A673 (cell line): ENCODE measurements at regions of chrX and their contacts with region 1.

Region 1: GRCh38 chrX:17689971-17690409 is 47.3 kb upstream of the SCML1 start:
- DNase-seq: peak; percentile 71
- H3K4me3 ChIP-seq: no peak overlapping the region
- H3K27ac ChIP-seq: no peak overlapping the region
- H3K4me1 ChIP-seq: no peaks in the 10 kb centered on the region
- H3K27me3 ChIP-seq: peaks cover 5% of the 10 kb centered on the region
- CTCF ChIP-seq: peak; percentile 74

Region 2: GRCh38 chrX:17120816-17121215 is 569.2 kb before region 1 on chrX:
- CTCF ChIA-PET with region 1: no interaction called
- POLR2A ChIA-PET with region 1: no interaction called
- intact Hi-C with region 1: loop called (anchors 5 kb)
- DNase-seq: no peak
- H3K4me3 ChIP-seq: no peak overlapping the region
- H3K27ac ChIP-seq: no peak overlapping the region
- H3K4me1 ChIP-seq: no peaks in the 10 kb centered on the region
- H3K27me3 ChIP-seq: no peaks in the 10 kb centered on the region
- CTCF ChIP-seq: no peak

Region 3: DNA sequence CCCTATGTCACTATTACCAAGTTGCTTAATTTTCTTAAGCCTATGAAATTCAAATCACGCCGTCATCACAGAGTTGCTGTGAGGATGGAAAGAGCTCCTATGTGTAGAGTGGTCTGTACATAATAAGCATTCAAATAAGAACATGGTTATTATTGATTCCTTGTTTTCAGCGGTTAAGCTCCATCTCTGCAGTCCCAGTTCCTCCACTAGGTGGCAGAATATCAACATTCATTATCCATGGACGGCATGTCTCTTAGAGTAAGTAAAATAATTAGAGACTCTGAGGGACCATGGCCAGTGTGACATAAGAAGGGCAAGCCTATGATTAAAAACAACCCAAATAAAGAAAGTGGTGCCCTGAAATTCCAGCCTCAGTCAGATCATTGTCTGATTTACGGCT is 447.5 kb before region 1 on chrX:
- CTCF ChIA-PET with region 1: interaction called, 3 read pairs
- POLR2A ChIA-PET with region 1: no interaction called
- intact Hi-C with region 1: loop called (anchors 5 kb)
- DNase-seq: peak; percentile 62
- H3K4me3 ChIP-seq: no peak overlapping the region
- H3K27ac ChIP-seq: no peak overlapping the region
- H3K4me1 ChIP-seq: no peaks in the 10 kb centered on the region
- H3K27me3 ChIP-seq: peaks cover 9% of the 10 kb centered on the region
- CTCF ChIP-seq: peak; percentile 86

Region 4: DNA sequence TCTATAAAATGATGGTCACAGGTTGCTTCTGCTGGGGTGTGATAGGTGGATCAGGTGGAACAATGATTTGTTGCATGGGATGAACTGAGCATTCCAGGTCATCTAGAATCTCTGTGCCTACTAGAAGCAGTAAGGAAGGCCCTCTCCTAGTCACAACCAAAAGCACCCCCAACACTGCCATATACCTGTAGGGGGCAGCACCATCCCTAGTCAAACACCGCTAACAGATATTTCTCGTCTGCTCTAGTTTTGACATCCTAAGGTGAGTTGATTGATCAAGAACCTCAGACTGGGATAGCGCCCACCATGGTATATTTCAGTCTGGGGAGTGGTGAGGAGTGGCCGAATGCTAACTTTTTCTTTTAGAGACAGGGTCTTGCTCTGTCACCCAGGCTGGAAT is 154.8 kb before region 1 on chrX:
- CTCF ChIA-PET with region 1: no interaction called
- POLR2A ChIA-PET with region 1: no interaction called
- intact Hi-C with region 1: loop called (anchors 1 kb)
- DNase-seq: peak; percentile 57
- H3K4me3 ChIP-seq: no peak overlapping the region
- H3K27ac ChIP-seq: no peak overlapping the region
- H3K4me1 ChIP-seq: no peaks in the 10 kb centered on the region
- H3K27me3 ChIP-seq: no peaks in the 10 kb centered on the region
- CTCF ChIP-seq: peak; percentile 66